Activated B cell treated with CpG ODN at 0.5 μM for 24 hours (primary cell): ENCODE measurements at regions of chr17 and their contacts with region 1.

Region 1: GRCh38 chr17:50547035-50547735 is at the start of gene SPATA20:
- DNase-seq: peak; percentile 81
- ATAC-seq: peak; percentile 89
- H3K4me3 Mint-ChIP-seq: peak within 1 kb of the TSS; percentile 85
- H3K27ac Mint-ChIP-seq: peak within 1 kb of the TSS; percentile 66
- H3K4me1 Mint-ChIP-seq: peaks cover 21% of the 10 kb centered on the region
- H3K27me3 Mint-ChIP-seq: peaks cover 7% of the 10 kb centered on the region
- CTCF ChIP-seq: no peak
- total RNA-seq, gene SPATA20: 45.6 and 52.3 TPM in 2 replicates

Region 2: GRCh38 chr17:50534222-50534978 is 12.8 kb before region 1 on chr17:
- CTCF ChIA-PET with region 1: no interaction called
- POLR2A ChIA-PET with region 1: no interaction called
- intact Hi-C with region 1: no loop called
- DNase-seq: no peak
- ATAC-seq: peak; percentile 28
- H3K4me3 Mint-ChIP-seq: no peak overlapping the region
- H3K27ac Mint-ChIP-seq: no peak overlapping the region
- H3K4me1 Mint-ChIP-seq: peaks cover 12% of the 10 kb centered on the region
- H3K27me3 Mint-ChIP-seq: peaks cover 57% of the 10 kb centered on the region
- CTCF ChIP-seq: no peak

Region 3: GRCh38 chr17:50626037-50626574 is 78.9 kb after region 1 on chr17:
- CTCF ChIA-PET with region 1: interaction called, 7 read pairs
- POLR2A ChIA-PET with region 1: no interaction called
- intact Hi-C with region 1: loop called (anchors 1 kb)
- DNase-seq: peak; percentile 47
- ATAC-seq: peak; percentile 76
- H3K4me3 Mint-ChIP-seq: no peak overlapping the region
- H3K27ac Mint-ChIP-seq: no peak overlapping the region
- H3K4me1 Mint-ChIP-seq: no peaks in the 10 kb centered on the region
- H3K27me3 Mint-ChIP-seq: peaks cover 39% of the 10 kb centered on the region
- CTCF ChIP-seq: no peak

Region 4: GRCh38 chr17:50841949-50842354 is 294.8 kb after region 1 on chr17:
- CTCF ChIA-PET with region 1: interaction called, 4 read pairs
- POLR2A ChIA-PET with region 1: interaction called, 3 read pairs
- intact Hi-C with region 1: loop called (anchors 1 kb)
- DNase-seq: no peak
- ATAC-seq: peak; percentile 74
- H3K4me3 Mint-ChIP-seq: no peak overlapping the region
- H3K27ac Mint-ChIP-seq: no peak overlapping the region
- H3K4me1 Mint-ChIP-seq: no peaks in the 10 kb centered on the region
- H3K27me3 Mint-ChIP-seq: no peaks in the 10 kb centered on the region
- CTCF ChIP-seq: no peak

Region 5: DNA sequence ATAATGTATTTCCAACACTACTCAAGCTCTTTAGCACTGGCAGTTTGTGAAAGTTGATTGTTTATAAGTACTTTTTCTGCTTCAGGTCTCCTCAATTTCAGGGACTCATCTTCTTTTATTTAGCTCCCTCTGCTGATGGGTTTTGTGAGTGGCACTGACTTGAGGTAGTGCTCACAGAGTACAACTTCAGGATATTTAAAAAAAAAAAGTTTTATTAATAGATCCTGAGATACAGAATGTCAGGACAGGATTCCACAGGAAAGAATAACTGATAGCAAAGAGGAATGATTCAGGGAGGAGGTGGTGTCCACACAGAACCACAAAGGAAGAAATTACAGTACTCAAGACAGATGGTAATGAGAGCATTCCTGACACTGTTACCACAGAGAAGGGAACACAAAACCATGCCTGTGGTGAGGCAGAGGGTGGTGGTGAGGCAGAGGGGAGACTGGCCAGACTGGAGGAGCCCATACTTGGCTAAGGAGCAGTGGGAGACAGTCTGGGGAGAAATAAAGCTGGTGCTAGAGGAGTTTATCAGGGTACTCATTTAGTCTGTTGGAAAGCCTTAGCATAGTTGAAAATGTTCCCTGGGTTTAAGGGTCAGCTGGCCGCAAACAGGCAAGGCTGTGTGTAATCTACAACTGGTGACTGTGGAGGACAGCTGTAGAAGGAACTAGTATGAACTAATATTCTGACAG is 509.8 kb after region 1 on chr17:
- CTCF ChIA-PET with region 1: no interaction called
- POLR2A ChIA-PET with region 1: no interaction called
- intact Hi-C with region 1: loop called (anchors 10 kb)
- DNase-seq: no peak
- ATAC-seq: peak; percentile 71
- H3K4me3 Mint-ChIP-seq: no peak overlapping the region
- H3K27ac Mint-ChIP-seq: no peak overlapping the region
- H3K4me1 Mint-ChIP-seq: peaks cover 20% of the 10 kb centered on the region
- H3K27me3 Mint-ChIP-seq: no peaks in the 10 kb centered on the region
- CTCF ChIP-seq: peak; percentile 63